HCT116 (cell line): ENCODE measurements at regions of chr16 and their contacts with region 1.

Region 1: DNA sequence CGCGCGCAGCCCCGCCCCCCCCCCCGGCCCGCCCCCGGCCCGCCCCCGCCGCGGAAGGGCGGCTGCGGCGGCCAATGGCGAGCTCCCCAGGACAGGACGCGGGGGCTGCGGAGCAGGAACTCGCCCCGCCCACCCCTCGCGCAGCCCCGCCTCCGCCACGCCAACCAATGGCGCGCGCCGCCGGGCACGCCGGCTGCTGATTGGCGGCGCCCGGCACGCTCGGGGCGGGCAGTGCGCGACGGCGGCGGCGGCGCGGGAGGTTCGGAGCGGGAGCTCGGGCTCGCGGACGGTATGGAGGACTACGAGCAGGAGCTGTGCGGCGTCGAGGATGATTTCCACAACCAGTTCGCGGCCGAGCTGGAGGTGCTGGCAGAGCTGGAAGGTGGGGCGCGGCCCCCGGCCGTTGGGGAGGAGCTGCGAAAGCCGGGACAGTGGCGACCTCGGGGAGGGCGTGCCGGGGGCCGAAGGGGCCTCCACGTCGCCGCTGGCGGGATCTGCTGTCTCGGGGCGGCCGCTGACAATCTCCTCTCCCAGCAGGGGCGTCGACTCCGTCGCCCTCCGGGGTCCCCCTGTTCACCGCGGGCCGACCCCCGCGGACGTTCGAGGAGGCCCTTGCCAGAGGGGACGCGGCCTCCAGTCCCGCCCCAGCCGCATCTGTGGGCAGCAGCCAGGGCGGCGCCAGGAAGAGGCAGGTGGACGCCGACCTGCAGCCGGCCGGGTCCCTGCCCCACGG is at the start of gene CHTF18:
- DNase-seq: peak; percentile 72
- ATAC-seq: peak; percentile 80
- H3K4me3 ChIP-seq: peak within 1 kb of the TSS; percentile 81 to 99
- H3K27ac ChIP-seq: peak within 1 kb of the TSS; percentile 88
- H3K4me1 ChIP-seq: peaks cover 5 to 37% of the 10 kb centered on the region in 2 experiments; a peak in 3 of 4 replicates
- H3K27me3 ChIP-seq: no peaks in the 10 kb centered on the region
- CTCF ChIP-seq: no peak
- POLR2A ChIP-seq: peak; percentile 38
- RAD21 ChIP-seq: no peak
- total RNA-seq, gene CHTF18: 145 TPM

Region 2: GRCh38 chr16:714558-715476 is 73.7 kb before region 1 on chr16 and contains the start of gene METRN:
- CTCF ChIA-PET with region 1: interaction called, 19 read pairs
- POLR2A ChIA-PET with region 1: interaction called, 9 read pairs
- RAD21 ChIA-PET with region 1: interaction called in 1 of 2 experiments, 3 read pairs
- intact Hi-C with region 1: loop called (anchors 1 kb)
- DNase-seq: no peak
- ATAC-seq: peak; percentile 64
- H3K4me3 ChIP-seq: peak within 1 kb of the TSS; percentile 59 to 74
- H3K27ac ChIP-seq: peak within 1 kb of the TSS; percentile 92
- H3K4me1 ChIP-seq: peaks cover 37 to 75% of the 10 kb centered on the region in 2 experiments
- H3K27me3 ChIP-seq: no peaks in the 10 kb centered on the region
- CTCF ChIP-seq: no peak
- POLR2A ChIP-seq: no peak
- RAD21 ChIP-seq: no peak
- total RNA-seq, gene METRN: 193 TPM

Region 3: DNA sequence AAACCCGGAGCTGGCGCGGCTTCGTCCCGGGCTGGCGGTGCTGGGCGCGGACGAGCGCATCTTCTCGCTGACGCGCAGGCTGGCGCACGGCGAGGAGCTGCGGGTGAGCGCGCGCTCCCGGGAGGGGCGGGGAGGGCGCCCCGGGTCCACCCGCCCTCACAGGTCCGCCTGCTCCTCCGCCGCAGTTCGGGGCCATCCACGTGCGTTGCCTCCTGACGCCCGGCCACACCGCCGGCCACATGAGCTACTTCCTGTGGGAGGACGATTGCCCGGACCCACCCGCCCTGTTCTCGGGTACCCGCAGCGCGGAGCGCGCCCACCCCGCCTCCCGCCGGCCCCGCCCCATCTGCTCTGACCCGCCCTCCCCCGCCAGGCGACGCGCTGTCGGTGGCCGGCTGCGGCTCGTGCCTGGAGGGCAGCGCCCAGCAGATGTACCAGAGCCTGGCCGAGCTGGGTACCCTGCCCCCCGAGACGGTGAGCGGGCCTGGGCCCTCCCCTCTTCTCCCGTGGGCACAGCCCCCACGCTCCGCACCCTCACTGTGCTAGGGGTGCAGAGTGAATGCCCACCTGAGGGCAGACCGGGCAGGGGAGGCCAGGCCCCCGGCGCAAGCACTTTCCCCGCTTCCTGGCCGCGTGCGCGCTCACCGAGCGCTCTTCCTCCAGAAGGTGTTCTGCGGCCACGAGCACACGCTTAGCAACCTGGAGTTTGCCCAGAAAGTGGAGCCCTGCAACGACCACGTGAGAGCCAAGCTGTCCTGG is 60.2 kb before region 1 on chr16:
- CTCF ChIA-PET with region 1: no interaction called
- POLR2A ChIA-PET with region 1: no interaction called
- RAD21 ChIA-PET with region 1: no interaction called
- intact Hi-C with region 1: loop called (anchors 1 kb)
- DNase-seq: peak; percentile 86
- ATAC-seq: peak; percentile 55
- H3K4me3 ChIP-seq: peak overlapping the region; percentile 80 to 89
- H3K27ac ChIP-seq: peak overlapping the region; percentile 96
- H3K4me1 ChIP-seq: peaks cover 5 to 31% of the 10 kb centered on the region in 2 experiments; a peak in 3 of 4 replicates
- H3K27me3 ChIP-seq: no peaks in the 10 kb centered on the region
- CTCF ChIP-seq: no peak
- POLR2A ChIP-seq: peak; percentile 71
- RAD21 ChIP-seq: no peak

Region 4: DNA sequence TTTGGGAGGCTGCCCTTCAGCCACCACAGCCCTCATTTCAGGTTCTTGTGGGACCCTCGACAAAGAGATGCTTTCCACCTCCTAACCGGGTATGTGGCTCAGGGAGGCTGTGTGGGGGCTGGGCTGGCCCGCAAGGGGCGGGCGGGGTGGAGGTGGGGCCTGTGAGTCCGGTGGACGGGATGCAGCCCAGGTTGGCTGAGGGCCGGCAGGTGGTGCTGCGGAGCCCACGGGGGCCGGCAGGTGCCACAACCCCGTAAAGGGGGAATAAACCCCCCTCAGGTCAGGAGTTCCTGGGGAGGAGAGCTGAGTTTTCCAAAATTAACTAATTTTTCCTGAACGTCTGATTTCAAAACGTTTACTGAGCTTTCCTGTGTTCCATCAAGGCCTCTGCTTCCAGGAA is 42.8 kb before region 1 on chr16:
- CTCF ChIA-PET with region 1: interaction called, 9 read pairs
- POLR2A ChIA-PET with region 1: interaction called, 3 read pairs
- RAD21 ChIA-PET with region 1: no interaction called
- intact Hi-C with region 1: loop called (anchors 2 kb)
- DNase-seq: no peak
- ATAC-seq: peak; percentile 81
- H3K4me3 ChIP-seq: no peak overlapping the region
- H3K27ac ChIP-seq: no peak overlapping the region
- H3K4me1 ChIP-seq: peaks cover 2 to 18% of the 10 kb centered on the region in 2 experiments; a peak in 3 of 4 replicates
- H3K27me3 ChIP-seq: no peaks in the 10 kb centered on the region
- CTCF ChIP-seq: peak; percentile 52 to 76 (median 70)
- POLR2A ChIP-seq: no peak
- RAD21 ChIP-seq: peak; percentile 65